Activated naive CD4-positive, alpha-beta T cell treated with anti-CD3 and anti-CD28 coated beads for 36 hours (primary cell): ENCODE measurements at regions of chr12 and their contacts with region 1.

Region 1: GRCh38 chr12:107093417-107094182 is at the start of gene CRY1:
- DNase-seq: peak; percentile 93
- H3K4me3 Mint-ChIP-seq: no peak within 1 kb of the TSS
- H3K27ac Mint-ChIP-seq: no peak within 1 kb of the TSS
- H3K4me1 Mint-ChIP-seq: peaks cover 4% of the 10 kb centered on the region
- H3K27me3 Mint-ChIP-seq: peaks cover 3% of the 10 kb centered on the region
- total RNA-seq, gene CRY1: 15.2 to 17.5 TPM

Region 2: GRCh38 chr12:105107494-105108371 is 1985.9 kb before region 1 on chr12 and contains the start of gene WASHC4:
- CTCF ChIA-PET with region 1: no interaction called
- intact Hi-C with region 1: loop called (anchors 2 kb)
- DNase-seq: peak; percentile 95
- H3K4me3 Mint-ChIP-seq: peak within 1 kb of the TSS; percentile 90
- H3K27ac Mint-ChIP-seq: peak within 1 kb of the TSS; percentile 91
- H3K4me1 Mint-ChIP-seq: peaks cover 35% of the 10 kb centered on the region
- H3K27me3 Mint-ChIP-seq: peaks cover 13% of the 10 kb centered on the region
- total RNA-seq, gene WASHC4: 23.7 to 26.0 TPM

Region 3: DNA sequence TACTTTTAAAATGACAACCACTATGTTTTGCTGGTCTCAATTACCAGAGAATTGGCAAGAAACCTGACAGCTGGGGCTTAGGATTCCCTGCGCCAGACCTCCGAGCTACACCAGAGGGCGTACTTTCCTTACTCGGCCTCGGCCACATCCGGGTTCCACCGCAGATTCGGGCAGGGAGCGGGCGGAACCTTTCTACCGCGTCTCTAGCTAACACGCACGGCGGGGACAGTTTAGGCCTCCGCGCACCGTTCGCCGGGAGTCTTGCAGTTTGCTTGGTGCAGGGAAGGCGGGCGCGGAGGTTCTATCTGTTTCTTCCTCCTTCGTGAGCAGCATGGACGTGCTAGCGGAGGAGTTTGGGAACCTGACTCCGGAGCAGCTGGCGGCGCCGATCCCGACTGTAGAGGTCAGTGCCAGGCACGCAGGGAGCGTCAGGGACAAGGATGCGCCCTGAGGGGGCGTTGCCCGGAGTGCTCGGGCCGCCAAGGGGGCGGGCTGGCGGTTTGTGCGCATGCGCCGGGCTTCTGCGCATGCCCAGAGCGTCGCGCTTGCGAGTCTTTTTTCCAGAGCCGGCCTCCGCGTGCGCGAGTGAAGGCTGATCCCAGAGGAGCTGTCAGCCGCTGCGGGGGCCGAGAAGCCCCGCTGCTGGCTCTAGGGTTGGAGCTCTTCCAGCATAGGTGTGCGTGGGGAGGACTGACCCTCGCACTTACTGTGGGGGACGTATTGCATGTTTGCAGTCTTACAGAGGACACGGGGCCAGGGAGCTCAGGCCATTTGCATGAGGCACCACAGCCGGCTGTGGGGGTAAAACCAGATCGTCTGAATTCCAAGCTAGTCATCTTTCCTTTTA is 735.8 kb before region 1 on chr12 and contains the start of gene POLR3B:
- CTCF ChIA-PET with region 1: no interaction called
- intact Hi-C with region 1: loop called (anchors 1 kb)
- DNase-seq: peak; percentile 97
- H3K4me3 Mint-ChIP-seq: peak within 1 kb of the TSS; percentile 92
- H3K27ac Mint-ChIP-seq: peak within 1 kb of the TSS; percentile 89
- H3K4me1 Mint-ChIP-seq: peaks cover 11% of the 10 kb centered on the region
- H3K27me3 Mint-ChIP-seq: no peaks in the 10 kb centered on the region
- total RNA-seq, gene POLR3B: 6.4 to 6.8 TPM

Region 4: DNA sequence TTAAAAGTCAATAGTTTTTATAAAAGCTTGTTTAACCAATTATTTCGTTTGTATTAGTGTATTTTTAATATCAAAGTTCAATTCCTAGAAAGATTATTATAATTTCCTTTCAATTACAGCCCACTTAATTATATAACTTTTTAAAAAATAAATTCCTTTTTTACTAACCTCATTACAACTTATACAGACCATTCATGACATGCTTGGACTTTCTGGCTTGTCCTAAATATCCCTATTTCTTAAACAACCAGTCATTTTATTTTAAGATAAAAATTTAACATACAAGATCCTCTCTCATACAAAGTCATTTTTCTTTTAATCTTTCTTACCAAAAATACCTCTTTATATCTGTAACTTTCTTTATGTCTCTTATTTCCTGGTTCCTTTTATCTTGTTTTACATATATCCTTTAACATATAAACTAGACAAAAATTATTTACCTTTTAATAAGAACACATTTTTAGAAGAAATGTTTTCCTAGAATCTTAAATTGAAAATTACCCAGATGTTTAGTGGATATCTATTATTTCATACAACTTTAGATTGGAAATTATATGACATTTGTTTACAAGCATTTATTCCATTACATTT is 148.2 kb before region 1 on chr12:
- CTCF ChIA-PET with region 1: no interaction called
- intact Hi-C with region 1: no loop called
- DNase-seq: no peak
- H3K4me3 Mint-ChIP-seq: no peak overlapping the region
- H3K27ac Mint-ChIP-seq: no peak overlapping the region
- H3K4me1 Mint-ChIP-seq: no peaks in the 10 kb centered on the region
- H3K27me3 Mint-ChIP-seq: no peaks in the 10 kb centered on the region

Region 5: DNA sequence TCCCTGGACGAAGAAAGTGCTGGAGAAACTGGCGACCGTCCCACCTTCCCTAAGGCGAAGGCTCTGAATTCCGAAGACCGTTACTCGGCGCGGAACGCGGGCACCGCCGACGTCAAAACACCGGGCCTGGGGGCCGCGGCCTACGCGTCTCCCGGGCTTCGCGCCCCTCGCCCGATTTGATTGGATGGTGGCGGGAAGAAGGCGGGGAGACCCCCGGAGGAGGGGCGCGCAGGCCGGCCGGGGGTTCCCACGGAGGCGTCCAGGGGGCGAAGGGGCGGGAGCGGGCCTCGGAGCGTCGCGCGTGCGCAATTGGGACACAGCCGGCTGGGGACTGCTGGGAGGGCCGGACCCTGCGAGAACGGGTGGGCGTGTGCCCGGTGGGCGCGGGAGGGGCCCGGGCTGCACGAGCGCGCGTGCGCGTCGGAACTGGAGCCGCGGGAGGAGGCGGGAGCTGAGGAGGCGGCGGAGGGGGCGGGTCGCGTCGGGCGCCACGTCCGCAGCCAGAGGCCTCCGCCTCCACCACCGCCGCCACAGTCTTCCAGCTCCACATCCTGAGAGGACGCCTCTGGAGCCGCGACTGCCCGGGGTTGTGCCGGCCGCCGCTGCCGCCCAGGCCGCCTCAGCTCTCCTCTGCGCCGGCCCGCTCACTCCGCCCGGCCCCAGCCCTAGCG is 138.1 kb before region 1 on chr12 and contains the start of gene TMEM263:
- CTCF ChIA-PET with region 1: interaction called, 3 read pairs
- intact Hi-C with region 1: loop called (anchors 1 kb)
- DNase-seq: peak; percentile 87
- H3K4me3 Mint-ChIP-seq: peak within 1 kb of the TSS; percentile 99
- H3K27ac Mint-ChIP-seq: peak within 1 kb of the TSS; percentile 91
- H3K4me1 Mint-ChIP-seq: peaks cover 14% of the 10 kb centered on the region
- H3K27me3 Mint-ChIP-seq: no peaks in the 10 kb centered on the region
- total RNA-seq, gene TMEM263: 29.1 to 30.4 TPM

Region 6: DNA sequence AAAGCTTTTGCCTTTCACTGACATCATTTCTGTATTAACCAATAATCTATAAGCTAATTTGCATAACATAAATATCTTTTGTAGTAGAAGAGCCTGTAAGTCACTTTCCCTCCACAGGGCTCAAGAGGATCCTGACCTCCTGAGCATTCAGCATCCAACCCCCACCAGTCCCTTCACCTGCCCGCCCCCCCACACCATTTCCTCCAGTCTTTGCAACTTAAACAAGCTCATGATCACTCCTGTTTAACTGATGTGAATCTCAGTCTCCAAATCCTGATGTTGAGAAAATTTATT is 11.8 kb after region 1 on chr12:
- CTCF ChIA-PET with region 1: interaction called, 22 read pairs
- intact Hi-C with region 1: loop called (anchors 1 kb)
- DNase-seq: no peak
- H3K4me3 Mint-ChIP-seq: no peak overlapping the region
- H3K27ac Mint-ChIP-seq: no peak overlapping the region
- H3K4me1 Mint-ChIP-seq: no peaks in the 10 kb centered on the region
- H3K27me3 Mint-ChIP-seq: peaks cover 3% of the 10 kb centered on the region

Region 7: DNA sequence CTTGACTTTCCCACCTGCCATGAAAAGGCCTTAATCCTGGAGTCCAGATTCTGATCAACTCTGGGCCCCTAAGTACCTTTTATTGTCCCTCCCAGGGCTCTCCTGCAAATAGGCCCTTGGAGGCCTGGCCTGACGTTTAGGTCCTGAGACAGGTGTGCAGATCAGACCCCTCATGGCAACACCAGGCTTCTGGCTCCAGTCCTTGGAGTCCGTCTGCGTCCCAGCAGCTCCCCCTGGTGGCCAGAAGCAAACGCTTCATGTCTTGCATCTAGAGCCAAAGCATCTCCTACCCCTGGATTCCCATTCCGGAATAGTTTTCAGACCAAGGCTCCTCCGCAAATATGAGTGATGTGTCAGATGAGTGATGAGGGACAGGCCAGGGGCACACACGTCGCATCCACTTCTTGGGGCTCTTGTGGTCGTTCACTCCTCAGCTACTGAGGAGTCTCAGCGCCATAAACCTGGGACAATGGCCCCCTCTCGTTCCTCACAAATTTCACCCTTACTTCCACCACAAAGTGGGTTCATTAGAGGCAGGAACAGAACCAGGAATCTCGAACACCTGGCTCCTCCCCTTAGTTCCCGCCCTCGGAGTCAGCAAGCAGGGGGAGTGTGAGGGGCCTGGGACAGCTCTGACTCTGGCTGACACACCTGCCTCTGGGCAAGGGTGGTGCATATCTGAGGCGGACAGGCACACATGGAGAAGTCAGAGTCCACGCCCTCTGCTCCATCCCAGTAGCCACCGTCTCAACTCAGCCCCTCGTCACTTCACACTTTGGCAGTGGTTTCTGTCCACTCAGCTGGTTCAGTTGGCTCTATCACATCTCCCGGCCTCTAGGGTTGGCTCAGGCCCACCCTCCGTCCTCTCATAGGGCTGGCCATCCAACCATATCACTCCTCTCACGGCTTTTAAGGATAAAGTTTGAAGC is 514.1 kb after region 1 on chr12:
- CTCF ChIA-PET with region 1: interaction called, 3 read pairs
- intact Hi-C with region 1: loop called (anchors 1 kb)
- DNase-seq: peak; percentile 87
- H3K4me3 Mint-ChIP-seq: no peak overlapping the region
- H3K27ac Mint-ChIP-seq: no peak overlapping the region
- H3K4me1 Mint-ChIP-seq: no peaks in the 10 kb centered on the region
- H3K27me3 Mint-ChIP-seq: no peaks in the 10 kb centered on the region